Pancreas (tissue), 10 donors: ENCODE measurements at regions of chr19 and their contacts with region 1.

Region 1: GRCh38 chr19:13255041-13255718 is 105.0 kb downstream of the IER2 start:
- DNase-seq: no peak
- ATAC-seq: no peak
- H3K4me3 ChIP-seq: no peak overlapping the region
- H3K27ac ChIP-seq: no peak overlapping the region
- H3K4me1 ChIP-seq: no peaks in the 10 kb centered on the region
- H3K27me3 ChIP-seq: peaks cover 0 to 4% (median 0%) of the 10 kb centered on the region in 4 donors
- CTCF ChIP-seq: no peak

Region 2: GRCh38 chr19:13082192-13083007 is 172.8 kb before region 1 on chr19:
- intact Hi-C with region 1: no loop called
- DNase-seq: no peak
- ATAC-seq: peak; percentile 38 to 76 (median 70)
- H3K4me3 ChIP-seq: no peak overlapping the region
- H3K27ac ChIP-seq: peak overlapping the region in 2 of 4 donors; percentile 6 to 8
- H3K4me1 ChIP-seq: peaks cover 0 to 3% (median 0%) of the 10 kb centered on the region in 3 donors
- H3K27me3 ChIP-seq: no peaks in the 10 kb centered on the region
- CTCF ChIP-seq: no peak

Region 3: DNA sequence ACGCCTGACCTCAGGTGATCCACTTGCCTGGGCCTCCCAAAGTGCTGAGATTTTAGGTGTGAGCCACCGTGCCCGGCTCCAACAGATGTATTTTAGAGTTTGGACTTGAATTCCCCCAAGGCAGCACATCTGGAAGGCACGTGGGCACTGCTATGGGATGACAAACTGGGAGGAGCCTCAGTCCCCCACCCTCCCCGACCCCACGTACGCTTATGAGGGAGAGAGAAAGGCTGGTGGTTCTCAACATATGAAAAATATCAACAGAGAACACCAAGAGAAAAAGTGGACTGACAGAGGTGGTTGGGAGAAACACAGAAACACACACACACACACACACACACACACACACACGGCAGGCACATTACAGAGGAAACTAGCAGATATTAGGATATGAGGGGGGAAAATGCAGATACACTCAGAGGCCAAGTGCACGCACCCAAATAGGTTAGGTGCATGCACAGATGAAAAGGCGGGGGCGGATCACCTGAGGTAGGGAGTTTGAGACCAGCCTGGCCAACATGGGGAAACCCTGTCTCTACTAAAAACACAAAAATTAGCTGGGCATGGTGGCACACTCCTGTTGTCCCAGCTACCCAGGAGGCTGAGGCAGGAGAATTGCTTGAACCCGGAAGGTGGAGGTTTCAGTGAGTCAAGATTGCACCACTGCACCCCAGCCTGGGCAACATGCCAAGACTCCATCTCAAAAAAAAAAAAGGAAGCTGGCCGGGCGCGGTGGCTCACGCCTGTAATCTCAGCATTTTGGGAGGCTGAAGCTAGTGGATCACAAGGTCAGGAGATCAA is 108.2 kb before region 1 on chr19:
- intact Hi-C with region 1: no loop called
- DNase-seq: no peak
- ATAC-seq: no peak
- H3K4me3 ChIP-seq: no peak overlapping the region
- H3K27ac ChIP-seq: no peak overlapping the region
- H3K4me1 ChIP-seq: peaks cover 0 to 6% (median 3%) of the 10 kb centered on the region in 3 donors
- H3K27me3 ChIP-seq: no peaks in the 10 kb centered on the region
- CTCF ChIP-seq: no peak

Region 4: GRCh38 chr19:13195678-13196077 is 59.5 kb before region 1 on chr19:
- intact Hi-C with region 1: loop called in 1 of 3 experiments (anchors 10 kb)
- DNase-seq: peak; percentile 64 to 87 (median 76)
- ATAC-seq: peak; percentile 81 to 88 (median 88)
- H3K4me3 ChIP-seq: no peak overlapping the region
- H3K27ac ChIP-seq: no peak overlapping the region
- H3K4me1 ChIP-seq: peaks cover 0 to 6% (median 0%) of the 10 kb centered on the region in 3 donors
- H3K27me3 ChIP-seq: no peaks in the 10 kb centered on the region
- CTCF ChIP-seq: no peak

Region 5: DNA sequence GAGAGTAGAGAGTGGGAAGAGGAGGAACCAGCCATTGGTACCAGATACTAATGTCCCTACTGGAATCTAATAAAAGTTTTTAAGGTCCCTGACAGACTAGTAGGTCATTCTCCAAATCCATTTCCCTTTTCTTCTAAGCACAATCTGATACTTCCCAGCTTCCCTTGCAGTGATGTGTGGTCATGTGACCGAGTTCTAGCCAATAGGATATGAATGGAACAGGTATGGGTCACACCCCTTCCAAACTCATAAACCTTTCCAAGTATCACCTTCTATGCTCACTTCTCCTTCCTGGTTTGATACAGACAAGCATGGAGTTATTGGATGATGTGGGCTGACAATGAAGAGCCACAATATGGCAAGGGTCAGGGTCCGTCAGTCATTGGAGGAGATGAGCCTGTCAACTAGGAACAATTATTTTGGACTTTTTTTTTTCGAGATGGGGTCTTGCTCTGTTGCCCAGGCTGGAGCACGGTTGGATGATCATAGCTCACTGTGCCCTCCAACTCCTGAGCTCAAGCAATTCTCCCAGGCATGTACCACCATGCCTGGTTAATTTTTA is 196.3 kb after region 1 on chr19:
- intact Hi-C with region 1: no loop called
- DNase-seq: no peak
- ATAC-seq: no peak
- H3K4me3 ChIP-seq: no peak overlapping the region
- H3K27ac ChIP-seq: no peak overlapping the region
- H3K4me1 ChIP-seq: no peaks in the 10 kb centered on the region
- H3K27me3 ChIP-seq: no peaks in the 10 kb centered on the region
- CTCF ChIP-seq: no peak